ENCODE measurements at regions of chr1 and their contacts with region 1.

Region 1: DNA sequence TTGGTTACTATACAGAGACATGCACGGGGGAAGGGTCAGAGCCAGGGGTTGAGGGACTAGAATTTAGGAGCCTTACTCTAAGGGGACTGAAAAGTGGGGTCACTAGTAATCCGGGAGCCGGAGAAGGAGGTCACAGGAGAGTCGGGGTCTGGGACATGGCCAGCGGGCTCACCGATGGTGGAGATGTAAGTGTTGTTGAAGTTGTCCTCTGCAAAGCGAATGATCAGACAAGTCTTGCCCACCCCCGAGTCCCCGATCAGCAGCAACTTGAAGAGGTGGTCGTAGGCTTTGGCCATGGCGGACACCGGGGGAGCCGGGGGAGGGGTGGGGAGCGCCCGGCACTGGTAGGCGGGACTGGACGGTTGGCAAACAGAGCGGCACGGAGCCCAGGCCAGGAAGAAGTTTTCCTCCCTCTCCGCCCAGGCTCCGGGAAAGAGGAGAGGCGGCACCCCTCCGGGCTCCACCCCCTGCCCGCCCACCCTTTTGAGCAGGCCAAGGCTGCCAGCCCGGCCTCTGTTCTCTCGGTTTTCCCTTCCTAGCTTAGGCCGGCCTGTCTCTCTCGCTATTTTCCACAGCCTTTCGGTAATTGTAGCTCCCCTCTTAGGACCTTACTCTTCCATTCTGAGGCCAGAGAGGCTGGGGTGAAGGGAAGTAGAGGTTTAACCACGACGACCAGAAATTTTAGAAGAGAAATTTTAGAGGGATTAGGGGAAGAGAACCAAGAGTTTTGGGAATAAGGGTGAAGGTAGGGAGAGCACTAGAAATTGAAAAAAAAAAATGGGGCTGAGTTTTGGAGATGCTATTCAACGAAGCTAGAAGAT is at the start of gene RAB13:
- DNase-seq: peak in 9 of 10 donors; percentile 38 to 92 (median 59)

Region 2: DNA sequence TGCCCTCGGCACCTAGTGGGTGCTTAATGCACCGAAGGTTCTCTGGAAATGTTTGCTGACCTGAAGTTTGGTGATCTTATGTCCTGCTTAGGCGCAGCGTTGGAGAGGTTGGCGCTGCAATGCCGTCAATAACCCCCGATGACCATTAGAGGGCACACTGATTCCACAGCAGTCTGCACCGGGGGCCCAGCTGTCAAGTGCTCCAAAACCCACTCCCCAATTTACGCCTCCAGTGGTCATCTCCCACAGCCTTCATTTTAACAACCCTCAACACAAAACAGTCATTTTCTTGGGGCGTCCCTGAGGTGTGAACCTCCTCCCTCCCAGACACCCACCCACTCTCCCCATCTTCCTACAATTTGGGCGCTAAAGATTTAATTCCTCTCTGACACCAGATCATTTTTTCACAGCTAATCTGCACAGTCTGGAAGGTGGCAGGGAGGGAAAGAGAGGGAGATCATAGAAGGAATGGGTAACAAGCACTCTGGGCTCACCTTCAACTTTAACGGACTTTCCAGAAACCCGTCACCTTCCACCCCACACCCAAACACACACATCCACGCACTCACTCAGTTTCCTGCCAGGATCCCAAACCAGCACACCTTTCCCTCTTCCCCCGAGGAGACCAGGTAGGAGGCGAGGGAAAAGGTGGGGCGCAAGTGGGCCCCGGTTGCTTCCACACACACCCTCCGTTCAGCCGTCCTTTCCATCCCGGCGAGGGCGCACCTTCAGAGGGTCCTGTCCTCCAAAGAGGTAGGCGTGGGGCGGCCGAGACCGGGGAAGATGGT is 308.2 kb before region 1 on chr1:
- intact Hi-C with region 1: loop called (anchors 1 kb)
- DNase-seq: peak in 8 of 10 donors; percentile 37 to 89 (median 46)

Region 3: GRCh38 chr1:153727463-153728304 is 258.5 kb before region 1 on chr1 and contains the start of gene INTS3:
- intact Hi-C with region 1: loop called (anchors 5 kb)
- DNase-seq: peak; percentile 99 to 100 (median 100)

Region 4: DNA sequence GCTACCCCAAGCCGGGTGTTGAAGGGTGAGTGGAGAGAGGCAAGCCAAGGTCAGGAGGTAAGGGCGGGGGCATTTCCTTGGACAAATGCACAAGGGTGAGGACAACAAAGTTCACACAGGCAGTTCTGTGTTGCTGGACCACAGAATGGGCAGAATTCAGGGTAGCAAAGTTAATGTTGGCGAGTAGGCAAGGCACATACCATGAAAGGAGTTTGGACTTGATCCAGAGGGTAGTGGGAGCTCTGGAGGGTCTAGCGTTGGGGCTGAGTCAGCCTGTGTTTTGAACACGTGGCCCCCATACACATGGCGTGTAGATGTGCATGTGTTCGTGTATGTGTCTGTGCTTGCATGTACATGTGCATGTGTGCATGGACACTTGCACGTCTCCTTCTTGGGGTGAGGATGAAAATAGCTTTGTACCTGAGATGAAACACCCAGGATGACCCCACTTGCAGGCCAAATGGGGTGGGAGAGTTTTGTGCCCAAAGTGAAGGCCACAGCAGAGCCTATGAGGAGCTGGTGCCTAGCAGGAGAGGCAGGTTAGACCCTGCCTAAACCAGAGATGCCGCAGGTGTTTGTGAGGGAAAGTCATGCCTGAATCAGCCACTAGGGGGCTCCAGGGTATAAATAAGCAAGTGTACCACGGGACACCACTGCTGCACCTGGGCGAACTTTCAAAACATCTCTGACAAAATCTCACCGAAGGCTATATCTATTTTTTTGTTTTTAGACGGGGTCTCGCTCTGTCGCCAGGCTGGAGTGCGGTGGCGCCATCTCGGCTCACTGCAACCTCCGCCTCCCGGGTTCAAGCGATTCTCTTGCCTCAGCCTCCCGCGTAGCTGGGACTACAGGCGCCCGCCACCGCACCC is 189.1 kb before region 1 on chr1:
- intact Hi-C with region 1: loop called (anchors 1 kb)
- DNase-seq: peak in 7 of 10 donors; percentile 68 to 89 (median 75)

Region 5: DNA sequence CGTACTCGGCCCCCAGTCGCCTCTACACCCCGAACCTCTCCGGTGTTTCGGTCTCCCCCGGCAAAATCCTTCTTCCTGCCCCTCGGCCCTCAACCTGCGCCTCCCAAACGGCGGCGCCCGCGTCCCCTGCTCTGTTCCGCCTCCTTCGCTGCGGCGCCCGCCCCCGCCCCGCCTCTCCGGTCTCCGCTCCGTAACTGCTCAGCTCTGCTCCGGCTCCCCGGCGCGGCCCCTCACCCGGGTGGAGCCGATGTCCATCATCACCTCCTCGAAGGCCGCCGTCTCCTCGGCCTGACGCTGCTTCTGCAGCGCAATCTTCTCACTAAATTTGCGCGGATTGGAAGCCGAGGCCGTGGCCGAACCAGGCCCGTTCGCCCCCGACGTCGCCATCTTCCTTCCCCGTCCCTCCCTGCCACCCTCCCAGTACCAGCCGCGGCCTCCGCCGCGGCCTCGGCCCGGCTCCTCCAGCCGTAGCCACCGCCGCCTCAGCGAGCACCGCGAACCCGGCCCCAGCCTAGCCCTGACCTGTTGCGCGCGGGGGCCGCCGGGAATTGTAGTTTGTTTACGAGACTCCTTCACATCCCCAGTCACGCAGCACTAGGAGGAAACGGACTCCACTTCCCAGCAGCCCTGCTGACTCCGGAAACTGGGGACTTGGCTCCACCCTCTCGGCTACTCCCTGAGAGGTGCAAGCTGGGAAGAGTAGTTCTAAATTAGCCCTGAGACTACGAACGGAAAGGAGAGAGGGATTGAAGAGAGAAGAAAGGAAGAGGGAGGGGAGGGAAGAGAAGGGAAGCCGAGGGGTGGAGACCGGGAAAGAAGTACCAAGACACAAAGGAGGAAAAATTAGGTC is 27.8 kb before region 1 on chr1 and contains the start of gene CRTC2:
- intact Hi-C with region 1: no loop called
- DNase-seq: peak; percentile 98 to 100 (median 99)

Measured in posterior cingulate gyrus (tissue), 11 donors.